Esophagus muscularis mucosa (tissue), 4 donors: ENCODE measurements at regions of chr11 and their contacts with region 1.

Region 1: GRCh38 chr11:18526521-18527296 is at the start of gene TSG101:
- DNase-seq: peak; percentile 98
- H3K4me3 ChIP-seq: peak within 1 kb of the TSS; percentile 80 to 98 (median 97)
- H3K27ac ChIP-seq: peak within 1 kb of the TSS; percentile 88 to 96 (median 93)
- H3K4me1 ChIP-seq: peaks cover 16 to 51% (median 33%) of the 10 kb centered on the region in 4 donors
- H3K27me3 ChIP-seq: no peaks in the 10 kb centered on the region
- CTCF ChIP-seq: peak in 1 of 3 experiments; percentile 7
- EP300 ChIP-seq: no peak
- POLR2A ChIP-seq: peak; percentile 81
- total RNA-seq, gene TSG101: 60.1 to 93.2 (median 80.5) TPM

Region 2: DNA sequence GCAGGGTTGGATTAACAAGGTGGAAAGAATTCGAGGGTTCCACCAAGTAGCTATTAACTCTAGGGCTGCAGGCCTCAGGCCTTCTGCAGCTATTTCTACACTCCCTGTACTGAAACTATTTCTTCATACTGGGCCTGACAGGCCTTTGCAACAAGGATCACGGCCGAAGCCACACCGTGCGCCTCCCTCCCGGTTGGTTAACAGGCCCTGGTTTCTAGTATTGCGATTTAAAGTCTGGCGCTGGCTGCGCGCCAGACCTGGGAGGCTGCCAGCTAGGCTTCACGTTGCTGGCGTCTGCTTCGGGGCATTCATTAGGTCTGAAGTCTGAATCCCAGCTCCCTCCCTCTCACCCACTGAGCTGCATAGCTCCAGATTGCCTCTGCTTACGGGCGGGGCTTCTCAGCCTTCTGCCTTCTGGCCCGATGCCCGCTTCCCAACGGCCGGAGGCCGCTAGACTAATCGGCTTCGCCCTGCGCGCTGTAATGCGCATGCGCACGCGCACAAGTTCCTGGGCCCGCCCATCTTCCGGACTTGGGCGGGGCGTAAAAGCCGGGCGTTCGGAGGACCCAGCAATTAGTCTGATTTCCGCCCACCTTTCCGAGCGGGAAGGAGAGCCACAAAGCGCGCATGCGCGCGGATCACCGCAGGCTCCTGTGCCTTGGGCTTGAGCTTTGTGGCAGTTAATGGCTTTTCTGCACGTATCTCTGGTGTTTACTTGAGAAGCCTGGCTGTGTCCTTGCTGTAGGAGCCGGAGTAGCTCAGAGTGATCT is 130.8 kb before region 1 on chr11:
- intact Hi-C with region 1: loop called (anchors 5 kb)
- DNase-seq: peak; percentile 98
- H3K4me3 ChIP-seq: peak overlapping the region; percentile 80 to 89 (median 86)
- H3K27ac ChIP-seq: peak overlapping the region; percentile 92 to 97 (median 96)
- H3K4me1 ChIP-seq: peaks cover 15 to 37% (median 28%) of the 10 kb centered on the region in 4 donors
- H3K27me3 ChIP-seq: no peaks in the 10 kb centered on the region
- CTCF ChIP-seq: peak in 1 of 3 experiments; percentile 16
- EP300 ChIP-seq: no peak
- POLR2A ChIP-seq: peak; percentile 10